ENCODE measurements at regions of chr2 and their contacts with region 1.

Region 1: DNA sequence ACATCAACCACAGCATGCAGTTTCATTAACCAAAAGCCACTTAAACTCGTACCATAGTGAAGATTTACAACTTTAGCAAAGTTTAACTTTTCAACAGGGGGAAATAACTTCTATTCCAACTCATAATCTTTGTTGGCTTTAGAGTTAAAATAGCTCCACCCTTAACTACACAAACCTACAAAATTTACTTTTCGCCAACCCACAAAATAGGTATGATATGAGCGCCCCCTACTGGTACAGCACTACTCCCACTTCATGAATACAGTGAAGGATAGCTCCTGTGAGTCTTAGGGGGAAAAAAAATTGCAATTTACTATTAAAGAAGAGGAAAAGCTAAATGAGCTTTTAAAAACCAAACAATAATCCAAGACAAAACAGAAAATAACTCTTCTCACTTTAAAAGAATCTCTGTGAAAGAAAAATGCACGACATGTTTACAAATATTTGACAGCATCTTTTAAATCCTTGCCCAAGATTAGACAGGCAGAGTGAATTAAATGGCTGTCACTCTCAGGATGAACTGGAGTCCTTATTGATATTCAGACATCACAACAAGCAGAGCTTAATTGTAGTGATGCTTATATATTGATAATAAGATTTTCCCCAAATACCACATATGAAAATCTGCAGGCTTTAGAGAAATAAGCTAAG is 32.2 kb downstream of the TMEFF2 start:
- DNase-seq: peak; percentile 90
- H3K4me3 Mint-ChIP-seq: no peak overlapping the region
- H3K27ac Mint-ChIP-seq: no peak overlapping the region
- H3K4me1 Mint-ChIP-seq: peaks cover 5% of the 10 kb centered on the region
- H3K27me3 Mint-ChIP-seq: peaks cover 21% of the 10 kb centered on the region

Region 2: DNA sequence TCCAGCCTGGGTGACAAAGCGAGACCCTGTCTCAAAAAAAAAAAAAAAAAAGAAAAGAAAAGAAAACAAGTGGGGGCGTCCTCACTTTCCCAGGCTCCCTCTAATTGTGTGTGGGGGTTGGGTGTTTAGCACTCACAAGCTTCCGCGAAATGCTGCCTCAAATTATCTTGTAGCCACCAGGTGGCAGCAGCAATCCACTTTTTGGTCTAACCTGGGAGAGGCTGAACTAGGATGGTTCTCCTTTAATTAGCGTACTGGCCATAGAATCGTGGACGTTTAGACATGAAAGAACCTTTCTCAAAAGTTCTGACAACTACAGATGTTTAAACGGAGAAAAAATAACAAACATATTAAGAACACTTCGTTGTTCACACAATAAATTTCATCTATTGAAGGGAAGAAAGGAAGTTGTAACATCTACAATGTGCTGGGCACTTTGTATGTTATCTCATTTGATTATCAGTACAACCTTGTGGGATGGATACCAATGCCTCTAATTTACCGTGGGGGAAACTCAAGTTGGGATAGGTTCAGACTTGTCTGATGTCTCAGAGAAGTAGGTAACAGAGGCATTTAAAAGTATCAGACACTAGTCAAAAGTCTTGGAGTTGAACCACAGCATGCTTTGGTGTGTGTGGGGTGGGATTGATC is 607.3 kb before region 1 on chr2:
- intact Hi-C with region 1: loop called (anchors 1 kb)
- DNase-seq: peak; percentile 94
- H3K4me3 Mint-ChIP-seq: no peak overlapping the region
- H3K27ac Mint-ChIP-seq: no peak overlapping the region
- H3K4me1 Mint-ChIP-seq: peaks cover 7% of the 10 kb centered on the region
- H3K27me3 Mint-ChIP-seq: peaks cover 20% of the 10 kb centered on the region

Region 3: GRCh38 chr2:191691016-191691735 is 471.3 kb before region 1 on chr2:
- intact Hi-C with region 1: loop called (anchors 5 kb)
- DNase-seq: peak; percentile 88
- H3K4me3 Mint-ChIP-seq: no peak overlapping the region
- H3K27ac Mint-ChIP-seq: no peak overlapping the region
- H3K4me1 Mint-ChIP-seq: peaks cover 31% of the 10 kb centered on the region
- H3K27me3 Mint-ChIP-seq: no peaks in the 10 kb centered on the region

Region 4: GRCh38 chr2:191811807-191812602 is 350.5 kb before region 1 on chr2:
- intact Hi-C with region 1: loop called (anchors 1 kb)
- DNase-seq: peak; percentile 76
- H3K4me3 Mint-ChIP-seq: no peak overlapping the region
- H3K27ac Mint-ChIP-seq: no peak overlapping the region
- H3K4me1 Mint-ChIP-seq: no peaks in the 10 kb centered on the region
- H3K27me3 Mint-ChIP-seq: peaks cover 18% of the 10 kb centered on the region

Region 5: DNA sequence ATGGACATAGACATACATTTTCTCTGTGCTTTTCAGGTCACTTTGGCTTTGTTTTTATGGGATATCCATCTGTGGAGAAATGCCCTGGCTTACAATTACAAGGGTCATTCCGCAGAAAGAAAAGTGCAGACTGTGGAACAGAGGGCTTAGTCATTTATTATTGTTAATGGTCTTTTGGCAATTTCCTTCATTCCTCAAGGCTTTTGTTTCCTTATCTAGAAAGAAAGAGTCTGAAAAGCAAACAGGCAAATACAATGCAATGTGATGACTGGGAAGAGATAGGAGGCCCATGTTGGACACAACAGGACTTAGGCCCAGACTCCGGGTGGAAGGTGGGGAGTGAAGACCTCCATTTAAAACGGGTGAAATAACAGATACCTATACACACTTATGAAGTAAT is 186.1 kb before region 1 on chr2:
- intact Hi-C with region 1: no loop called
- DNase-seq: no peak
- H3K4me3 Mint-ChIP-seq: no peak overlapping the region
- H3K27ac Mint-ChIP-seq: no peak overlapping the region
- H3K4me1 Mint-ChIP-seq: no peaks in the 10 kb centered on the region
- H3K27me3 Mint-ChIP-seq: peaks cover 4% of the 10 kb centered on the region

Region 6: DNA sequence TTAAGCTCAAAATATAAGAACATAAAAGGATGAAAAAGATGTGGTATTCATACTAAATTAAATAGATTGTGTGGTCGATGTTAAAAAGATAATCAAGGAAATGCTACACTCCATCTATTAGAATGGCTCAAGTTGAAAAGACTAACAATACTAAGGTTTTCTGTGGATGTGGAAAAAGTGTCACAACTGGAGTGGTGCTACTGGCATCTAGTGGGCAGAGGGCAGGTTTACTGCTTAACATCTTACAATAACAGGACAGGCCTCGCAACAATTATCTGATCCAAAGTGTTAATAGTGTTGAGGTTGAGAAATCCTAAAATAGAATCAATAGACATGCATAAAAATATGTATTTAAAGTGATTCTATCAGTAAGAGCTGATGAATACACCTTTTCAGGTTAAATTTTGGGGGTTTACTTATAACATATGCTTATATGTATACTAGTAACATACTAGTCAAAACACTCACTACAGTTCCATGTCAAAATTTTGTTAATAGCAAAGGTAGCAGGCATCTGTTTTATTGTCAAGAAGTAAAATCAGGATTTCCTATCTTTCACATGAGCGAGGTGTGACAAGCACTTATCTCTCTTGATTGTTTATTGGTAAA is 123.7 kb after region 1 on chr2:
- intact Hi-C with region 1: no loop called
- DNase-seq: no peak
- H3K4me3 Mint-ChIP-seq: no peak overlapping the region
- H3K27ac Mint-ChIP-seq: no peak overlapping the region
- H3K4me1 Mint-ChIP-seq: no peaks in the 10 kb centered on the region
- H3K27me3 Mint-ChIP-seq: no peaks in the 10 kb centered on the region

Measured in activated CD4-positive, alpha-beta T cell treated with anti-CD3 and anti-CD28 coated beads, Interleukin-2, amount 10 ng/mL, durations not matched to agents 24 days and 14 days (primary cell).